Ovary (tissue), 10 donors: ENCODE measurements at regions of chr21 and their contacts with region 1.

Region 1: GRCh38 chr21:16891821-16892220 is 621.0 kb upstream of the CXADR start:
- DNase-seq: no peak
- H3K4me3 ChIP-seq: no peak overlapping the region
- H3K27ac ChIP-seq: no peak overlapping the region
- H3K4me1 ChIP-seq: no peaks in the 10 kb centered on the region
- H3K27me3 ChIP-seq: no peaks in the 10 kb centered on the region
- CTCF ChIP-seq: no peak
- EP300 ChIP-seq: no peak
- POLR2A ChIP-seq: no peak

Region 2: GRCh38 chr21:16870103-16870502 is 21.7 kb before region 1 on chr21:
- intact Hi-C with region 1: loop called in 1 of 4 experiments (anchors 1 kb)
- DNase-seq: no peak
- H3K4me3 ChIP-seq: no peak overlapping the region
- H3K27ac ChIP-seq: no peak overlapping the region
- H3K4me1 ChIP-seq: no peaks in the 10 kb centered on the region
- H3K27me3 ChIP-seq: no peaks in the 10 kb centered on the region
- CTCF ChIP-seq: no peak
- EP300 ChIP-seq: no peak
- POLR2A ChIP-seq: no peak

Region 3: GRCh38 chr21:17003763-17004373 is 112.0 kb after region 1 on chr21:
- intact Hi-C with region 1: no loop called
- DNase-seq: no peak
- H3K4me3 ChIP-seq: peak overlapping the region; percentile 19
- H3K27ac ChIP-seq: no peak overlapping the region
- H3K4me1 ChIP-seq: peaks cover 2% of the 10 kb centered on the region
- H3K27me3 ChIP-seq: no peaks in the 10 kb centered on the region
- CTCF ChIP-seq: no peak
- EP300 ChIP-seq: no peak
- POLR2A ChIP-seq: no peak